ENCODE measurements at regions of chr1 and their contacts with region 1.

Region 1: GRCh38 chr1:155167166-155168104 is 5.7 kb downstream of the KRTCAP2 start:
- DNase-seq: peak; percentile 95
- ATAC-seq: peak; percentile 85

Region 2: GRCh38 chr1:155091071-155091709 is 76.2 kb before region 1 on chr1:
- intact Hi-C with region 1: loop called (anchors 5 kb)
- DNase-seq: peak; percentile 89
- ATAC-seq: peak; percentile 57

Region 3: GRCh38 chr1:155193275-155193990 is 26.0 kb after region 1 on chr1:
- intact Hi-C with region 1: no loop called
- DNase-seq: peak; percentile 95
- ATAC-seq: peak; percentile 87

Measured in sciatic nerve (tissue), 2 donors.